T-cell (primary cell): ENCODE measurements at regions of chr4 and their contacts with region 1.

Region 1: GRCh38 chr4:147866532-147867271 is 134.8 kb downstream of the ARHGAP10 start:
- DNase-seq: peak; percentile 71 to 96 (median 89)
- ATAC-seq: peak; percentile 89 to 100 (median 98)
- H3K4me3 ChIP-seq: no peak overlapping the region
- H3K4me3 Mint-ChIP-seq: no peak overlapping the region
- H3K27ac ChIP-seq: no peak overlapping the region
- H3K27ac Mint-ChIP-seq: peak overlapping the region in 1 of 2 donors; percentile 36
- H3K4me1 ChIP-seq: no peaks in the 10 kb centered on the region
- H3K4me1 Mint-ChIP-seq: peaks cover 0 to 2% (median 0%) of the 10 kb centered on the region in 3 donors
- H3K27me3 ChIP-seq: no peaks in the 10 kb centered on the region
- H3K27me3 Mint-ChIP-seq: no peaks in the 10 kb centered on the region

Region 2: DNA sequence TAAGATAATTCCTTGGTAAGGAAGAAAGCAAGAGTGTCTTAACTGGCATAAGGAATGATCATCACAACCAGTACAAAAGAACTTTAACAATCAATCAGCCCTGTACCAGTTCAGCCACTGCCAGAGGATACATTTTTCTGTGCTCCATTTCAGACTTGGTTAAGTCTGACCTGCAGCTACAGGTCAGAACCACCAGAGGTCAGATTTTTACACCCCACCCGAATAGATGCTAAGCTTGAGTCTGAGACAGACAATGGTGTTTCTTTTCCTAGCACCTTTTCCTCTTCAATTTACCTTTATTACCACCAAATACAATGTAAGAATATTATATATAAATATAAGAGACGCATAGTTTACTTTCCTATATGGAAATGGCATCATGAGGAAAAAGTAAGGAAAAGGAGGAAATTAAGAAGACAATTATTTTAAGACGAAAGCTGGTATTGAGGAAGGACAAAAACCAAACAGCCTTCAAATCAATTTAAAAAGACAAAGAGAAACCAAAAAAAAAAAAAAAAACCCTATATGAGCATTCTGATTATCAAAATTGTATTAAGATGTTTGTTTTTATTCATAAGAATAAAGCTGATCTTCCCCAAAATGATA is 705.7 kb before region 1 on chr4:
- CTCF ChIA-PET with region 1: interaction called, 4 to 10 read pairs
- POLR2A ChIA-PET with region 1: no interaction called
- DNase-seq: peak in 1 of 35 experiments; percentile 18
- ATAC-seq: no peak
- H3K4me3 ChIP-seq: no peak overlapping the region
- H3K4me3 Mint-ChIP-seq: no peak overlapping the region
- H3K27ac ChIP-seq: no peak overlapping the region
- H3K27ac Mint-ChIP-seq: no peak overlapping the region
- H3K4me1 ChIP-seq: no peaks in the 10 kb centered on the region
- H3K4me1 Mint-ChIP-seq: peaks cover 0 to 2% (median 1%) of the 10 kb centered on the region in 3 donors
- H3K27me3 ChIP-seq: peaks cover 6 to 13% of the 10 kb centered on the region in 2 experiments
- H3K27me3 Mint-ChIP-seq: peaks cover 18 to 38% of the 10 kb centered on the region in 2 donors

Region 3: DNA sequence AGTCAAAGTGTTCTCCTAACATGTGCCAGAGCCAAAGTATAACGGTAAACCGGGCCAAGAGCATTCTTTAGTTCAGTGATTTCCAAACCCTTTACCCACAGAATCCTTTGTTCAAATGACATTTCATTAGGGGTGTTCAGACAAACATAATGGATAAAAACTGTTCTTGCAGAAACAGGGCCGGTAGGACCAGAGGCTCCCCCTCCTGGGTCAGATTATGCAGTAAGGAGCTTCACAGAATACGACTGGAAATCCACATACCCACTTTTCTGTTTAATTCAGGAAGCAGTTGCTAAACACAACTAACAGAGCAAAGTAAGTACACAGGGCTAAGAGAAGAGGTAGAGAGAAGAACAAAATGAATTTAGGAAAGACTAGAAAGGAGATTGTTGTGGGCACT is 296.1 kb before region 1 on chr4:
- CTCF ChIA-PET with region 1: interaction called, 3 to 12 read pairs
- POLR2A ChIA-PET with region 1: no interaction called
- DNase-seq: no peak
- ATAC-seq: no peak
- H3K4me3 ChIP-seq: no peak overlapping the region
- H3K4me3 Mint-ChIP-seq: no peak overlapping the region
- H3K27ac ChIP-seq: no peak overlapping the region
- H3K27ac Mint-ChIP-seq: no peak overlapping the region
- H3K4me1 ChIP-seq: no peaks in the 10 kb centered on the region
- H3K4me1 Mint-ChIP-seq: no peaks in the 10 kb centered on the region
- H3K27me3 ChIP-seq: no peaks in the 10 kb centered on the region
- H3K27me3 Mint-ChIP-seq: peaks cover 6 to 23% of the 10 kb centered on the region in 2 donors

Region 4: DNA sequence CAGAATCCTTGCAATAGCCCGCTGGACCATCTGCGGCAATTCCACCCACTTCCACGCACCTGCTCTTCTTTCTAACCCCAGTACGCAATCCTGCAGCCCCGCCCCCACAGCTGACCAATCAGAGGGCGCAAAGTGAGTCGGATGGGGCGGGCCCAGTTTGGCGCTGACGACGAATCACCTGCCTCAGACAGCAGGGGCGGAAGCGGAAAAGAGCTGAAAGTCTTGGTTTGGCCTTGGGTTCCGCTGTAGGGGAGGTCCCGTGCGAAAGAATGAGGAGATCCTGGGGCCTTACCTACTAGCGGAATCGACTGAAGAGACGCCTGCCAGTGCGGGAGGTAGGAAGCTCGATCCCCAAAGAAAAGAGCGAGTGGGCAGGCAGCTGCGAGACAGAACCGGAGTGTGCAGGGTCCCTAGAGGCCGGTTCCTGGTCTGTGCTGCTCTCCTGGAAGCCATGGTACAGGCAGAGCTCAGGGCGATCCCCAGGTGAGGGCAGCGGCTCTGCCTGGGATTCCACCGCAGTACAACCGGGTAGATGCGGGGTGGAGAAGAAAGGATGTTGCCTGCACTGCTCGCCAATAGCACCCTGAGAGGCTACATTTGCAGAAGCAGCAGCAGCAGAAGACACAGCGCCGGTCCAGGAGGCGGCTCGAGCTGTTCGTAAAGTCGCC is 249.4 kb before region 1 on chr4 and contains the start of gene TMEM184C:
- CTCF ChIA-PET with region 1: interaction called in 1 of 2 experiments, 45 read pairs
- POLR2A ChIA-PET with region 1: interaction called in 1 of 2 experiments, 4 read pairs
- DNase-seq: peak; percentile 96 to 99 (median 99)
- ATAC-seq: peak; percentile 94 to 99 (median 98)
- H3K4me3 ChIP-seq: peak within 1 kb of the TSS; percentile 81 to 90
- H3K4me3 Mint-ChIP-seq: peak within 1 kb of the TSS; percentile 95 to 96 (median 95)
- H3K27ac ChIP-seq: peak within 1 kb of the TSS; percentile 90
- H3K27ac Mint-ChIP-seq: peak within 1 kb of the TSS; percentile 96 to 98
- H3K4me1 ChIP-seq: peaks cover 31 to 32% of the 10 kb centered on the region in 2 experiments
- H3K4me1 Mint-ChIP-seq: peaks cover 33 to 52% (median 45%) of the 10 kb centered on the region in 3 donors
- H3K27me3 ChIP-seq: peaks cover 0 to 2% of the 10 kb centered on the region in 2 experiments
- H3K27me3 Mint-ChIP-seq: peaks cover 0 to 5% of the 10 kb centered on the region in 2 donors
- total RNA-seq, gene TMEM184C: 13.2 to 27.2 (median 21.8) TPM

Region 5: GRCh38 chr4:147707865-147708672 is 158.6 kb before region 1 on chr4:
- CTCF ChIA-PET with region 1: interaction called, 56 to 65 read pairs
- POLR2A ChIA-PET with region 1: interaction called in 1 of 2 experiments, 5 read pairs
- DNase-seq: peak in 32 of 35 experiments; percentile 11 to 77 (median 38)
- ATAC-seq: peak; percentile 43 to 74 (median 58)
- H3K4me3 ChIP-seq: no peak overlapping the region
- H3K4me3 Mint-ChIP-seq: no peak overlapping the region
- H3K27ac ChIP-seq: no peak overlapping the region
- H3K27ac Mint-ChIP-seq: no peak overlapping the region
- H3K4me1 ChIP-seq: no peaks in the 10 kb centered on the region
- H3K4me1 Mint-ChIP-seq: peaks cover 0 to 7% (median 2%) of the 10 kb centered on the region in 3 donors
- H3K27me3 ChIP-seq: no peaks in the 10 kb centered on the region
- H3K27me3 Mint-ChIP-seq: peaks cover 0 to 1% of the 10 kb centered on the region in 2 donors

Region 6: DNA sequence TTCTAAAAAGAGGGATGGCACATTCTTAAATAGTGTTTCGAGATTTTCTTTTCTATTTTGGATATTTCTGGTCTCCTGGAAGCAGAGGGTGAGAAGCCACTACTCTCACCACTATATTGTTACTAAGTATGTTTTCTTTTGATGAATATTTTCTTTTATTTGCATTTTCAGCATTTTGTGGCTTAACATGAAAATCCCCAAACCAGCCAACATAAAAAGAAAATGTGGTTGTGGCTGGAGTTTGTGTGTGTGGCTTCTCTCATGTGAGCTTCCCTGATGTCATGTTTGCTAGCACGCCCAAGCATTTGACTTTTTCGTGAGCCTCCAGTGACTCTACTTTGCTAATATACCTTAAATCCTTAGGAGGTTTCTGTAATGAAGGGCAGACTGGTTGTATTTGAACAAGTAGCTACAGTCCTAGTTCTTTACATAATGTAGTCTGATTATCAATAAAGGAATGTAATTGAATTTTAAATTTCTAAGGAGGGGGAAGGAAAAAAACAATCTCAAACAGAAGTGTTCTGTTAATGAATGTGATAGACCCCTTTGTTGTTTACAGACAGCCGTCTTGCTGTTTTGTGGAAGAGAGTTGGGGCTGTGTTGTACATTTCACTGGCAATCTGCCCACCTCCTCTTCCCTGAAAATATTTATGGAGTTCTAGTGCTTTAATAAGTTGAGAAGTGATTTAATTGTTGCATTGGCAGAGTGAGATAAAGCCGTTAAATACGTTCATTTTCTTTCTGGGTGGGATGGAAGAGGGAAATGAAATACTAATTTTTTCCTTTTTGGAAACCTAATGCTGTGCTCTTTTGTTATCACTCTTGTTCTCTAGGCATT is 20.2 kb before region 1 on chr4:
- CTCF ChIA-PET with region 1: interaction called, 12 to 14 read pairs
- POLR2A ChIA-PET with region 1: no interaction called
- DNase-seq: peak in 4 of 35 experiments; percentile 19 to 64 (median 29)
- ATAC-seq: peak in 1 of 4 experiments; percentile 69
- H3K4me3 ChIP-seq: no peak overlapping the region
- H3K4me3 Mint-ChIP-seq: no peak overlapping the region
- H3K27ac ChIP-seq: no peak overlapping the region
- H3K27ac Mint-ChIP-seq: no peak overlapping the region
- H3K4me1 ChIP-seq: peaks cover 4 to 5% of the 10 kb centered on the region in 2 experiments
- H3K4me1 Mint-ChIP-seq: no peaks in the 10 kb centered on the region
- H3K27me3 ChIP-seq: no peaks in the 10 kb centered on the region
- H3K27me3 Mint-ChIP-seq: no peaks in the 10 kb centered on the region